Activated T-helper 1 cell treated with anti-CD3 and anti-CD28 coated beads, Interleukin-12 subunit alpha, Interleukin-12 subunit beta, Interleukin-2, Interleukin-4 antibody, amounts not matched to agents 30 ng/mL and 10 ng/mL and 1 ng/mL, durations not matched to agents 14 hours and 24 hours and 36 hours (primary cell): ENCODE measurements at regions of chr14 and their contacts with region 1.

Region 1: GRCh38 chr14:38107216-38107631 is 100.5 kb upstream of the SSTR1 start:
- DNase-seq: no peak
- H3K4me3 Mint-ChIP-seq: no peak overlapping the region
- H3K27ac Mint-ChIP-seq: no peak overlapping the region
- H3K4me1 Mint-ChIP-seq: peaks cover 21% of the 10 kb centered on the region
- H3K27me3 Mint-ChIP-seq: no peaks in the 10 kb centered on the region

Region 2: DNA sequence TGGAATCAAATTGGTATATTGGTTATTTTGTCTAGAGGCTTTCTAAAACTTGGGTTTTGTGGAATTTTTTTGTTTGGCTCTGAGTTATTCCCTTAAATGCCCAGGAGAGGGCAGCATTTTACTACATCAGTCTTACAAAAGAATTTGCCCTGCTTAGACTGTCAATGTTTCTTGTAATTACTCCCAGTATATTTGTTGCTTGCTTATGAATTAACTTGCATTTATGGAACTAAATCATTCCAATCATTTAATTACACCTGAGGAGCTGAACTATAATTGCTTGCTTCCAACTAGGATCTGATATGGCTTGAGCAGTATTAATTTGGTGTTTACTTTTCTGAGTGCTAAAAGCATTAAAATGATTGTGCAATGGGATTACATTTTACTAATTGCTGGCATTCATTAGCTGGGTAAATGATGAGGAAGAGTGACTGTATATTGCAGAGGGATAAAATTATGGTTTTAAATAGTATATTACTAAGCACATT is 860.8 kb before region 1 on chr14:
- intact Hi-C with region 1: no loop called
- DNase-seq: no peak
- H3K4me3 Mint-ChIP-seq: no peak overlapping the region
- H3K27ac Mint-ChIP-seq: no peak overlapping the region
- H3K4me1 Mint-ChIP-seq: no peaks in the 10 kb centered on the region
- H3K27me3 Mint-ChIP-seq: no peaks in the 10 kb centered on the region

Region 3: DNA sequence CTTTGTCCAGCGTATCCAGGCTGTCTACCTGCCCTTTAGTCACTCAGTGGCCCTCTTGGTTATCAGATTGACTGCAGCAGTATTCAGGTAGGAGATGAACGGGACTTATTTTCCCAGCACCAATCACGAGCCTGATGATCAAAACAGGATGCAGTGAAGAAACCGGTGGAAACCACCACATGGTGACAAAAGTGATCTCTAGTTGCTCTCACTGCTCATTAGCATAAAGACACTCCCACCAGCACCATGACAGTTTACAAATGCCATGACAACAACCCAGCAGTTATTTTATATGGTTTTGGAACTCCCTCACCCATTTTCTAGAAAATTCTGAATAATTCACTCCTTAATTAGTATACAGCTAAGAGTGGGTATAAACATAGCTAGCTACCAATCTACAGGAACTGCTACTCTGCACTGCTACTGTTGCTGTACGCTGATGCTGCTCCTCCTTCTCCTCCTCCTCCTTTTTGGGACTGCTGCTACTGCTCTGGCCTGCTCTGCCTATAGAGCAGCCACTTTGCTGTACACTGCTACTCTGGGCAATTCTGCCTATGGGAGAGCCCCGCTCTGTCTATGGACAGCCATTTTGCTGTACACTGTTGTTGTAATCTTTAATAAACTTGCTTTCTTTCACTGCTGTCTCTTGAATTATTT is 42.0 kb before region 1 on chr14:
- intact Hi-C with region 1: loop called (anchors 1 kb)
- DNase-seq: peak; percentile 64
- H3K4me3 Mint-ChIP-seq: peak overlapping the region; percentile 52
- H3K27ac Mint-ChIP-seq: peak overlapping the region; percentile 78
- H3K4me1 Mint-ChIP-seq: peaks cover 15% of the 10 kb centered on the region
- H3K27me3 Mint-ChIP-seq: no peaks in the 10 kb centered on the region

Region 4: DNA sequence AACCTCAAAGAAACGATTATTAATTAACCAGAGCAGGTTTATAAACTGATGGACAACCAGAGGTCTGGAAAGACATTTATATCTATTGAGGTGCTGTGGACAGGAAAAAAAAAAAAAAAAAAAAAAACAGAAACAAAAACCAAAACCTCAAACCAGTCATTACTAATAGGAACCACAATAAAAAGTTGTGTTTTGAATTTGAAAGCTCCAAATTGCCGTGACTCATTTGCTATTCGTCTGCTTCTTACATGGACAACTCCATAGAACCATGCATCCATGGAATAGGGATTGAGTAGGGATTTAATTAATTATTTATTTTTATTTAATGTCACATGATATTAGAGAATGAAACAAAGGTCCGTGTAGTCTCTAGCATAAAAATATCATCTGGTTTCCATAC is 33.6 kb before region 1 on chr14:
- intact Hi-C with region 1: loop called (anchors 1 kb)
- DNase-seq: no peak
- H3K4me3 Mint-ChIP-seq: no peak overlapping the region
- H3K27ac Mint-ChIP-seq: no peak overlapping the region
- H3K4me1 Mint-ChIP-seq: peaks cover 32% of the 10 kb centered on the region
- H3K27me3 Mint-ChIP-seq: no peaks in the 10 kb centered on the region